Activated CD8-positive, alpha-beta T cell treated with anti-CD3 and anti-CD28 coated beads, Interleukin-2, amount 10 ng/mL, durations not matched to agents 7 days and 5 days (primary cell): ENCODE measurements at regions of chr6 and their contacts with region 1.

Region 1: GRCh38 chr6:33904050-33904746 is 100.4 kb upstream of the MLN start:
- DNase-seq: peak; percentile 97
- ATAC-seq: peak; percentile 90
- H3K4me3 Mint-ChIP-seq: peak overlapping the region; percentile 77
- H3K27ac Mint-ChIP-seq: peak overlapping the region; percentile 93
- H3K4me1 Mint-ChIP-seq: peaks cover 84% of the 10 kb centered on the region
- H3K27me3 Mint-ChIP-seq: no peaks in the 10 kb centered on the region

Region 2: DNA sequence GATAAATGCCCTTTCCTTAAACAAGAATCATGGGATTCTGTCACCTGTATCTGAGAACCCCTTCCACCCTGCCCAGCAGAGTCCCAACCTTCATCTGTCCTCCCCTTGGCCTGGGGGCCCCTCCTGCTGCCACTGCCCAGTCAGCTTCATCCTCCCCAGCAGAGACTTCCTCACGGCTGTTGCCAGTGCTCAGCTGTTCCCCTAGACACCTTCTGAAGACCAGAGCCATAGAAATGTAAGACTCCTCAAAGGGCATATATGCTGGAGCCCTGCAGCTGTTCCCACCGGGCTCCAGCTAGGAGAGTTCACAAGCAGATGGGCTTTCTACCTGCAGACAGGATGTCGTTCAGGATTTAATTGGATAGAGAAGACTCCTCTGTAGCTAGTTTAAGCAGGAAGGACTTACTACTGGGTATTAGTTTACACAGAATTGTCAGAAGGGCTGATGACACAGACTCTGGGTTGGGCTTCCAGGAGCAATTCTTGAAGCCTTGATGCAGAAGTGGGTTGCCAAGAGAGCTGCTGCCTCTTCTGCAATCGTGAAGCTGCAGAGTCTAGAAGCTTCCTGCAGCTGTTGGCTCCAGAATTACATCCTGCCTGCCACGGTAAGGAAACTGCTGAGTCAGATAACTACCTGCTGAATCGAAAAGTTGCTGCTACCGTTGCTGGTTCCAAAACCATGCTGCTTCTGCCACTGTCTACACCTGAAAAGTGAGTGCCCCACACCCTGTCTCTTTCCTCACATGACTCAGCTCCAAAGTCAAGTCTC is 43.3 kb before region 1 on chr6:
- CTCF ChIA-PET with region 1: interaction called, 13 read pairs
- POLR2A ChIA-PET with region 1: interaction called, 22 read pairs
- DNase-seq: peak; percentile 68
- ATAC-seq: peak; percentile 27
- H3K4me3 Mint-ChIP-seq: no peak overlapping the region
- H3K27ac Mint-ChIP-seq: peak overlapping the region; percentile 36
- H3K4me1 Mint-ChIP-seq: peaks cover 64% of the 10 kb centered on the region
- H3K27me3 Mint-ChIP-seq: peaks cover 39% of the 10 kb centered on the region

Region 3: GRCh38 chr6:33872761-33873160 is 31.4 kb before region 1 on chr6:
- CTCF ChIA-PET with region 1: no interaction called
- POLR2A ChIA-PET with region 1: no interaction called
- DNase-seq: no peak
- ATAC-seq: no peak
- H3K4me3 Mint-ChIP-seq: no peak overlapping the region
- H3K27ac Mint-ChIP-seq: no peak overlapping the region
- H3K4me1 Mint-ChIP-seq: peaks cover 7% of the 10 kb centered on the region
- H3K27me3 Mint-ChIP-seq: peaks cover 48% of the 10 kb centered on the region

Region 4: DNA sequence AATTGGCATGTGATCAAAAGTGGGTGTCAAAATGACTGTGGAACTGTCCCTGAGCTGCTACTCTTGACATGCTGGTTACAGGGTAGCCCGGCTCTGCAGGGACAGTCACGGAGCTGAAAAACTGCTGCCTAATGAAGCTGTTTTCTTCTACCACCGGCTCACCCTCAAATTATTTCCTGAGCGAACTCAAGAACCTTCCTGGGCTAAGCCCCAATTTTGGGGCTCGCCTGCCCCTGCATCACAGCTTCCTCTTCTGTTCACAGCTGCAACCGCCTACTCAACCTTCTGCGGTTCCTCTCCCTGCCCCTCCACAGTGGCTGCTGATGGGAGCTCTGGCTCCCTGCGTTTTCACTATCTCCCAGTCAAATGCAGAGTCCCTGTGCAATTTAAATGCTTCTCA is 10.4 kb after region 1 on chr6:
- CTCF ChIA-PET with region 1: interaction called, 17 read pairs
- POLR2A ChIA-PET with region 1: interaction called, 32 read pairs
- DNase-seq: peak; percentile 66
- ATAC-seq: peak; percentile 87
- H3K4me3 Mint-ChIP-seq: peak overlapping the region; percentile 36
- H3K27ac Mint-ChIP-seq: peak overlapping the region; percentile 83
- H3K4me1 Mint-ChIP-seq: peaks cover 40% of the 10 kb centered on the region
- H3K27me3 Mint-ChIP-seq: peaks cover 6% of the 10 kb centered on the region